ENCODE measurements at regions of chr11 and their contacts with region 1.

Region 1: GRCh38 chr11:78228467-78228866 is 39.7 kb downstream of the USP35 start:
- DNase-seq: peak in 3 of 9 experiments; percentile 28 to 50 (median 38)
- ATAC-seq: no peak
- H3K4me3 ChIP-seq: no peak overlapping the region
- H3K4me3 Mint-ChIP-seq: no peak overlapping the region
- H3K27ac ChIP-seq: no peak overlapping the region
- H3K27ac Mint-ChIP-seq: no peak overlapping the region
- H3K4me1 ChIP-seq: no peaks in the 10 kb centered on the region
- H3K4me1 Mint-ChIP-seq: peaks cover 4% of the 10 kb centered on the region
- H3K27me3 ChIP-seq: no peaks in the 10 kb centered on the region
- H3K27me3 Mint-ChIP-seq: no peaks in the 10 kb centered on the region
- CTCF ChIP-seq: no peak

Region 2: DNA sequence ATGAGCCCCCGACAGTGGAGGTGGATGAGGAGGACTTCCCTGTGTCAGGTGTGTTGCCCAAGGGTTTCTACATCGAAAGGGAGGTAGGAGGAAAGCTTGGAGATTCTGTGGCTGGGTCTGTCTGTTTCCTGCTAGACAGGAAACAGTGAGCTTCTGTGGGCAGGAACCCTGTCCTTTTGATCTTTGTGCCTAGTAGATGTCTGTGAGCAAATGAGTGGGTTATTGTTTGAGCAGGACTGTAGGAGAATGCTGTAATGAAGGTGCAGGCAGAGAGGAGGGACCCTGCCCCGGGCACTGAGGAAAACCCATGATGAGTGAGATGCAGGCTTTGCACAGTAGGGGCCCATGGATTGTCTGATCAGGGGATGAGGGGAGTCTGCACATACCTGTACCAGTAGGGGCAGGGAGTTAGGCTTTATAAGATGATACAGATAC is 25.7 kb before region 1 on chr11:
- CTCF ChIA-PET with region 1: interaction called, 4 read pairs
- POLR2A ChIA-PET with region 1: no interaction called
- intact Hi-C with region 1: loop called in 1 of 2 experiments (anchors 2 kb)
- DNase-seq: peak; percentile 31 to 90 (median 69)
- ATAC-seq: peak; percentile 79
- H3K4me3 ChIP-seq: peak overlapping the region; percentile 28 to 56
- H3K4me3 Mint-ChIP-seq: peak overlapping the region; percentile 82
- H3K27ac ChIP-seq: peak overlapping the region; percentile 67 to 89
- H3K27ac Mint-ChIP-seq: peak overlapping the region; percentile 98
- H3K4me1 ChIP-seq: peaks cover 28% of the 10 kb centered on the region
- H3K4me1 Mint-ChIP-seq: peaks cover 47% of the 10 kb centered on the region
- H3K27me3 ChIP-seq: no peaks in the 10 kb centered on the region
- H3K27me3 Mint-ChIP-seq: no peaks in the 10 kb centered on the region
- CTCF ChIP-seq: no peak

Region 3: DNA sequence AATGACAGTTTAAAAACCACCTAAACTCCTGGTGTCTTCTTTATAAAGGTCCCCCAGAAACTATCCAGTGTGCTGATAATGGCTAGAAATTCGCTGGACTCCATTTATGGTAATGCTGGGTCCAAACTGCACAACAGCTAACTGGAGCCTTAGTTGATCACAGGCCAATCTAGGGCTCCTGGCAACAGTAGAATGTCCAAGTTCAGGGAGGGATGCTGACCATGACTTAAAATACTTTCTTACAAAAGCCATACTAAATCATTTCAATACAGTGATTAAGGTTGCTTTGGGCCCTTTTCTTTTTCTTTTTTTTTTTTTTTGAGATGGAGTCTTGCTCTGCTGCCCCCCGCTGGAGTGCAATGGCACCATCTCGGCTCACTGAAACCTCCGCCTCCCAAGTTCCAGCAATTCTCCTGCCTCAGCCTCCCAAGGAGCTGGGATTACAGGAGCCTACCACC is 203.6 kb after region 1 on chr11:
- CTCF ChIA-PET with region 1: no interaction called
- POLR2A ChIA-PET with region 1: no interaction called
- intact Hi-C with region 1: loop called in 1 of 2 experiments (anchors 5 kb)
- DNase-seq: peak in 2 of 9 experiments; percentile 7 to 26
- ATAC-seq: no peak
- H3K4me3 ChIP-seq: no peak overlapping the region
- H3K4me3 Mint-ChIP-seq: no peak overlapping the region
- H3K27ac ChIP-seq: no peak overlapping the region
- H3K27ac Mint-ChIP-seq: no peak overlapping the region
- H3K4me1 ChIP-seq: no peaks in the 10 kb centered on the region
- H3K4me1 Mint-ChIP-seq: no peaks in the 10 kb centered on the region
- H3K27me3 ChIP-seq: no peaks in the 10 kb centered on the region
- H3K27me3 Mint-ChIP-seq: no peaks in the 10 kb centered on the region
- CTCF ChIP-seq: no peak

Region 4: GRCh38 chr11:78630561-78631303 is 402.3 kb after region 1 on chr11:
- CTCF ChIA-PET with region 1: no interaction called
- POLR2A ChIA-PET with region 1: no interaction called
- intact Hi-C with region 1: no loop called
- DNase-seq: no peak
- ATAC-seq: no peak
- H3K4me3 ChIP-seq: no peak overlapping the region
- H3K4me3 Mint-ChIP-seq: no peak overlapping the region
- H3K27ac ChIP-seq: no peak overlapping the region
- H3K27ac Mint-ChIP-seq: no peak overlapping the region
- H3K4me1 ChIP-seq: no peaks in the 10 kb centered on the region
- H3K4me1 Mint-ChIP-seq: no peaks in the 10 kb centered on the region
- H3K27me3 ChIP-seq: no peaks in the 10 kb centered on the region
- H3K27me3 Mint-ChIP-seq: peaks cover 18% of the 10 kb centered on the region
- CTCF ChIP-seq: no peak

Measured in CD8-positive, alpha-beta T cell (primary cell).